ENCODE measurements at regions of chr4 and their contacts with region 1.

Region 1: GRCh38 chr4:88591787-88592599 is at the start of gene HERC3:
- DNase-seq: peak; percentile 88
- H3K4me3 Mint-ChIP-seq: peak within 1 kb of the TSS; percentile 91
- H3K27ac Mint-ChIP-seq: peak within 1 kb of the TSS; percentile 88
- H3K4me1 Mint-ChIP-seq: peaks cover 35% of the 10 kb centered on the region
- H3K27me3 Mint-ChIP-seq: peaks cover 28% of the 10 kb centered on the region
- total RNA-seq, gene HERC3: 12.8 and 14.2 TPM in 2 replicates

Region 2: GRCh38 chr4:88007304-88008121 is 584.5 kb before region 1 on chr4 and contains the start of gene PKD2:
- intact Hi-C with region 1: loop called (anchors 2 kb)
- DNase-seq: peak; percentile 79
- H3K4me3 Mint-ChIP-seq: peak within 1 kb of the TSS; percentile 89
- H3K27ac Mint-ChIP-seq: peak within 1 kb of the TSS; percentile 80
- H3K4me1 Mint-ChIP-seq: peaks cover 41% of the 10 kb centered on the region
- H3K27me3 Mint-ChIP-seq: peaks cover 20% of the 10 kb centered on the region
- total RNA-seq, gene PKD2: 10.1 and 11.7 TPM in 2 replicates

Region 3: GRCh38 chr4:88523325-88524129 is 68.5 kb before region 1 on chr4 and contains the start of gene PYURF:
- intact Hi-C with region 1: loop called (anchors 1 kb)
- DNase-seq: peak; percentile 79
- H3K4me3 Mint-ChIP-seq: peak within 1 kb of the TSS; percentile 99
- H3K27ac Mint-ChIP-seq: peak within 1 kb of the TSS; percentile 97
- H3K4me1 Mint-ChIP-seq: peaks cover 60% of the 10 kb centered on the region
- H3K27me3 Mint-ChIP-seq: peaks cover 2% of the 10 kb centered on the region
- total RNA-seq, gene PYURF: 55.9 and 61.5 TPM in 2 replicates

Region 4: DNA sequence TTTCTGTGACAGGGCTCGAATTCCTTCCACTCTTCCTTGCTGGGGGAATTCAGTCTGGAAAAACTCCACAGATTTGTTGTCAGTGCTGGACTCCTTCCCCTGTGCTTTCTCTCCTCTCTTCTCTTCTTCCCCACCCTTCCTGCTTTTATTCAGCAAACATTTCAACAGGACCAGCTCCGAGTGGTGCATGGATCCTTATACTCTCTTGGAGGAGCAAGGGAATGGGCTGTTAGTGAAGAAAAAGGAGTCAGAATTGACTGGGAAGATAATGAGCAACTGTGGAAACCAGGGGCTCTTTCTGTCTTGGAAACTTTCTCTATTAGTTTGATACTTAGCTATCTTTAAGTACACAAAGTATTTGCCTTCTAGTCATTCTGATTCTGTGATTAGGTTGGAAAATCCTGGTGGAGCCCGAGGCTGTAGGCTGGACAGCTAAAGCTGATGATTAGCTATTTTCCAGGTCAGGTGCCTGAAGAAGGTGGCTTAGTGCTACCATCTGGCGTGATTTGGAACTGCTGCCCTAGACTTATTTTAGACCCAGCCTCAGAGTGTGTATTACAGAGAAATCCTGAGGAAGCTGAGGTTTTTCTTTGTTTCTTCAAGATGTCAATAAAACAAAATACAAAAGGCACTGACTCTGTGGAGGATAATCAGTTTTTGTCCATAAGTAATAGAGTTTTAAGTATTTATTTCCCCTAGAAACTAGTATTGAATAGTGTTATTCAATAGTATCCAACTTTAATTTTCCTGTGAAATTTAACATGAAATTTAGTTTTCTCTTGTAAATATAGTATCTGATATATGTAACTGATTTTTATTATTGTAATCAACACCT is 67.3 kb after region 1 on chr4:
- intact Hi-C with region 1: loop called (anchors 2 kb)
- DNase-seq: no peak
- H3K4me3 Mint-ChIP-seq: no peak overlapping the region
- H3K27ac Mint-ChIP-seq: no peak overlapping the region
- H3K4me1 Mint-ChIP-seq: peaks cover 12% of the 10 kb centered on the region
- H3K27me3 Mint-ChIP-seq: no peaks in the 10 kb centered on the region

Region 5: GRCh38 chr4:88728146-88728545 is 136.2 kb after region 1 on chr4:
- intact Hi-C with region 1: no loop called
- DNase-seq: no peak
- H3K4me3 Mint-ChIP-seq: no peak overlapping the region
- H3K27ac Mint-ChIP-seq: no peak overlapping the region
- H3K4me1 Mint-ChIP-seq: no peaks in the 10 kb centered on the region
- H3K27me3 Mint-ChIP-seq: no peaks in the 10 kb centered on the region

Region 6: GRCh38 chr4:88792268-88792781 is 200.3 kb after region 1 on chr4:
- intact Hi-C with region 1: loop called (anchors 2 kb)
- DNase-seq: no peak
- H3K4me3 Mint-ChIP-seq: no peak overlapping the region
- H3K27ac Mint-ChIP-seq: no peak overlapping the region
- H3K4me1 Mint-ChIP-seq: peaks cover 21% of the 10 kb centered on the region
- H3K27me3 Mint-ChIP-seq: peaks cover 21% of the 10 kb centered on the region

Region 7: DNA sequence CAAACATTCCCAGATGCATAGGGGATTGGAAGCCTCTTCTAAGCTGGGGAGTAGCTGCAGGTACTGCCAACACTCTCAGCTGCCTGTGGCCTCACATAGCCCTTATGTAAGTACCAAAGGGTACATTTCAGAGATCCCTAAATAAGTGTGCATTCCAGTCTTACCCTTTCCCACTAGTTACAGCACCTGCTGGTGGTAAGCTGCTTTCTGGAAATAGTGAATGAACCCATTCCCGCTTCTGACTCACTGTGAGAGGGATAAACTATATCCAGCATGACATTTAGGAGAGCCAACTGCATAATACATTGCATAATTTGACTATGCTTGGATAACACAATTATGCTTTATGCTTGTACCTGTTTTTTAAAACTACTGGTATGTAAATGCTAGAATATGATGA is 316.0 kb after region 1 on chr4:
- intact Hi-C with region 1: no loop called
- DNase-seq: no peak
- H3K4me3 Mint-ChIP-seq: no peak overlapping the region
- H3K27ac Mint-ChIP-seq: no peak overlapping the region
- H3K4me1 Mint-ChIP-seq: no peaks in the 10 kb centered on the region
- H3K27me3 Mint-ChIP-seq: no peaks in the 10 kb centered on the region

Region 8: GRCh38 chr4:89753582-89754066 is 1161.6 kb after region 1 on chr4:
- intact Hi-C with region 1: no loop called
- DNase-seq: no peak
- H3K4me3 Mint-ChIP-seq: no peak overlapping the region
- H3K27ac Mint-ChIP-seq: no peak overlapping the region
- H3K4me1 Mint-ChIP-seq: no peaks in the 10 kb centered on the region
- H3K27me3 Mint-ChIP-seq: peaks cover 1% of the 10 kb centered on the region